ENCODE measurements at regions of chr11 and their contacts with region 1.

Region 1: DNA sequence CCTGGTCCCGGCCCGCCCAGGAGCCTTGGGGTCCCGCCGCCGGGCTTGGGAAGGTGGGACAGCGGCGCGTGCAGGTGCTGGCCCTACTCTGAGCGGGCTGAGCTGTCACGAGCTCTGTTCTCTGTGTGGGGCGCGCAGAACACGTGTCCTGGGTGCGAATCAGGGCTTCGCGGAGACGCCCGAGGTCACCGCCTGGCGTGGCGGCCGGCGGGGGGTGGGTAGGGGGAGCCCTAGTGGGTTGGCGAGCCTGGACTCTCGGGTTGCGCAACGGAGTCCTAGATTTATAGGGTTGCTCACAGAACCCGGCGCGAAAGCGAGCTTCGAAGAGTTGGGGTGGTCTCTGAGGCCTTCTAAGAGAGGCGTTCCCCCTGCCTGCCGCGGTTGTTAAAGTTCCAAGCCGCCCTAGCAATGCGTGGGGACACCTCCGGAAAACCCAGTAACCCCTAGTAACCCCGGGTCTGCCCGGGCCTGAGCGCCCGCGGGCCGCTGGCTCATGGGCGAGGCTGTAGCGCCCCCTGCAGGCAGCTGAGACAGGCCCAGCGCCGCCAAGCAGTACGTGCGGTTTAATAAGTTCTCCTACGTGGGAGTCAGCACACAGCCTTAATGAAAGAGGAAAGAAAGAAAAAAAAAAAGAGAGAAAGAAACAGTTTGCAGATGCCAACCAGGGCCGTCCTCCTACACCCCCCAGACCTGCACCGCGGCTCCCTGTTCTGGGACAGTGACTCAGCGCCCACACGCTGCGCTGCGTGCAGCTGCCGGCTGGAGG is 2.8 kb downstream of the ADM start:
- DNase-seq: peak in 1 of 2 experiments; percentile 93
- H3K4me3 ChIP-seq: peak overlapping the region; percentile 70 to 92 (median 88)
- H3K27ac ChIP-seq: peak overlapping the region; percentile 34; the same call in 1 of the 2 replicates
- H3K4me1 ChIP-seq: peaks cover 6 to 22% (median 7%) of the 10 kb centered on the region in 4 experiments
- H3K27me3 ChIP-seq: peaks cover 0 to 36% (median 6%) of the 10 kb centered on the region in 4 experiments; a peak in 4 of 7 replicates
- CTCF ChIP-seq: peak; percentile 78 to 92 (median 80)
- EP300 ChIP-seq: peak in 1 of 2 experiments; percentile 87; a peak in 1 of 3 replicates
- POLR2A ChIP-seq: peak in 1 of 2 experiments; percentile 89; a peak in 2 of 3 replicates
- RAD21 ChIP-seq: peak; percentile 87 to 90

Region 2: DNA sequence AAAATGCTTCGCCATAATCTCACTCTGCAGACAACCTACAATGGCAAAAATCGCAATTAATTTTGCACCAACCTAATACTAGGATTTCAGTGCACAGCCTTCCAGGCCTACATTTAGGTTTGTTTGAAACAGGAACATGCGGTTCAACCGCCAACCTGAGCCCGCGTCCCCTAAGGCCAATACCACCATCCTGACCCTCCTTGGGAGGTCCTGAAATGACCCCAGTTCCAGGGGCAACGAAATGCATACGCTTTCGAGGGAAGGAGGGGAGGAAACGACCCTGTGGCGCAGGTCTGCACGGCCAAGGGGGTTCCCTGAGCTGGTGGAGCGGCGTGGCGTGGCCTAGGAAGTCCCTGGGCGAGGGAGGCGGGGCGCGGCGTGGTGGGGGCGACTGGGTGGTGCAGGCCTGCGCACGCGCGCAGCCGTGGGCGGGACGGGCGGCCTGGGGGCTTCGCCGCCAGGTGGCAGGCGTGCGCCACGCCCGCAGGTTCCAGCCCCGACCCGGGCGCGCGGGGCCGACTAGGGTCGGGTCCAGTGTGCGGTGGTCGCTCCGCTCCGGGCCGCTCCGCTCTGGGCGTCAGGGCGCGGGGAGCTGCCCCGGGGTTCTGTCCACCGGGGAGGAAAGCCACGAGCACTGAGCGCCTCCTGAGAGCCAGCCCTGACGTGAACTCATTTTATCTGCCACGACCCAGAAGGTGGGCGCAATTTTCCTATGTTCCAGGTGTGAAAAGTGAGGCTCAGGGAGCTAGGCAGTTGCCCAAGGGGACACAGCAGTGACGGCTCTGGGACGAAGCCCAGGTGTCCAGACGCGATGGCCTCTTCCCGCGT is 549.6 kb before region 1 on chr11:
- CTCF ChIA-PET with region 1: interaction called, 4 read pairs
- POLR2A ChIA-PET with region 1: interaction called, 11 read pairs
- DNase-seq: peak in 1 of 2 experiments; percentile 91
- H3K4me3 ChIP-seq: peak overlapping the region; percentile 23 to 59 (median 48)
- H3K27ac ChIP-seq: no peak overlapping the region
- H3K4me1 ChIP-seq: peaks cover 0 to 20% (median 14%) of the 10 kb centered on the region in 4 experiments; a peak in 6 of 7 replicates
- H3K27me3 ChIP-seq: no peaks in the 10 kb centered on the region
- CTCF ChIP-seq: peak; percentile 84 to 93 (median 91)
- EP300 ChIP-seq: no peak
- POLR2A ChIP-seq: 0 out of 3 replicates have a peak, but pooled peaks of 1 of the 2 experiments have one; percentile 27
- RAD21 ChIP-seq: peak; percentile 76 to 91

Region 3: GRCh38 chr11:10181811-10182210 is 125.8 kb before region 1 on chr11:
- CTCF ChIA-PET with region 1: interaction called, 11 read pairs
- POLR2A ChIA-PET with region 1: no interaction called
- DNase-seq: no peak
- H3K4me3 ChIP-seq: no peak overlapping the region
- H3K27ac ChIP-seq: no peak overlapping the region
- H3K4me1 ChIP-seq: no peaks in the 10 kb centered on the region
- H3K27me3 ChIP-seq: no peaks in the 10 kb centered on the region
- CTCF ChIP-seq: peak in 1 of 3 experiments; percentile 7; a peak in 1 of 4 replicates
- EP300 ChIP-seq: no peak
- POLR2A ChIP-seq: no peak
- RAD21 ChIP-seq: peak in 1 of 2 experiments; percentile 6; a peak in 1 of 4 replicates

Region 4: DNA sequence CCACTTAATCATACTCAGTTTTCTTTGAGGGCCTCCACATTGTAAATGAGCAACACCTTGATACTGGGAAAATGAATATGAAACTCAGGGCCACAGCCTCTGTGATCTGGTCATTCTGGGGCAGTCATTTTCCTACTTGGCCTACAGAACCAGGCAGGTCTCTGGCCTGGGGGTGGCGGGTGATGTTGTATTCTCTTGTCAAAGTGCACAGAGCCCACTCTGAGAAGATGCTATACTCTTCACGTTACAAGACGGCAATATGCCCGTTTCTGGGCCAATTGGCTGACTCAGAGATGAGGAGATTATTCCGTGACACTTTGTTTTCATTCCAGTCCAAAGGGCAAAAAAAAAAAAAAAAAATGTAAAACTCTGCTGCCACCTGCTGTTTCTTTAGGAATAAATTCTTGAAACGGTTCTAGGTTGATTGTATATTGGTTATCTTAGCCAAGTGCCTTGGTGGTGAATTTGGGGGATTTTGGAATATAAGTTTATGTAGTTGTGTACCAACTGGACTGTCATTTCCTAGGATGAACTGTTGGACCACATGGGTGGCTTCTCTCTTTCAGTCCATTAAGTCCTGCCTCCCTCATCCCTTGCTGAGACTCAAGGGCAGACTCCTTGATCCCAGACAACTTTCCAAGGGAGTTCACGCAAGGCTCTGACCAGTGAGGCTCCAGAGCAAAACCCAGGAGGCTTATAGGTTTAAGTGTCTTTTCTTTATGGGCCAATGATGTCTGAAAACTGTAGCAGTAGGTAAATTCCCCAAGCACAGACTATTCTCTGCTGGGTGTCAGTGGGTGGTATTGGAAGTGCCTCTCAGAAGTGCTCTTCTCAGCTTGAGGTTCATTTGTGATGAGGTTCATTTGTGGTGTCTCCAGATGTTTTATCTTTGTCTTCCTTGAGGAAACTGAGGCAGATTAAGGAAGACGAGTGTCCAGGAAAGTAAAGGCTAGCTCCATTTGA is 15.5 kb after region 1 on chr11:
- CTCF ChIA-PET with region 1: interaction called, 32 read pairs
- POLR2A ChIA-PET with region 1: interaction called, 62 read pairs
- DNase-seq: no peak
- H3K4me3 ChIP-seq: no peak overlapping the region
- H3K27ac ChIP-seq: no peak overlapping the region
- H3K4me1 ChIP-seq: peaks cover 6 to 15% (median 11%) of the 10 kb centered on the region in 4 experiments; a peak in 6 of 7 replicates
- H3K27me3 ChIP-seq: no peaks in the 10 kb centered on the region
- CTCF ChIP-seq: peak in 2 of 3 experiments; percentile 23 to 24; a peak in 2 of 4 replicates
- EP300 ChIP-seq: no peak
- POLR2A ChIP-seq: no peak
- RAD21 ChIP-seq: peak; percentile 50 to 59

Region 5: DNA sequence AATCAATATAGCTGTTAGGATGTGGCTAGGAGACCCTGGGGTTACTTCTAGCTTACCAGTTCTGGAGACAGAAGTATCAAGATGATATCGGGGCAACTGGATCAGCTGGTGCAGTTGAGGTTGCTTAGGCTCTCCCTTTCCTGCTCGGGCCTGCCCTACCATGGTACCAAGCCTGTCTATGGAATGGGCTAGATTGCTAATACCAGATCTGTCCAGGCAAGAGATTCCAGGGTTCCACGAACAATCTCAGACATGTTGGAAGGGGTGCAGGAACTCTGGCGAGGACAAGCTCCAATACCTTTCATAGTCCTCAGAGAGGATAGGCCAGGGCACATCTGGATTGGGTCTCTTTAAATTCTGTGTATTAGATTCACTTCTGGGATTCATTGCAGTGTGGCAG is 51.1 kb after region 1 on chr11:
- CTCF ChIA-PET with region 1: interaction called, 16 read pairs
- POLR2A ChIA-PET with region 1: interaction called, 129 read pairs
- DNase-seq: no peak
- H3K4me3 ChIP-seq: no peak overlapping the region
- H3K27ac ChIP-seq: no peak overlapping the region
- H3K4me1 ChIP-seq: peaks cover 0 to 8% (median 0%) of the 10 kb centered on the region in 4 experiments; a peak in 3 of 7 replicates
- H3K27me3 ChIP-seq: no peaks in the 10 kb centered on the region; a peak in 1 of 7 replicates
- CTCF ChIP-seq: no peak
- EP300 ChIP-seq: no peak
- POLR2A ChIP-seq: no peak
- RAD21 ChIP-seq: no peak

Measured in H1 (cell line).